ENCODE measurements at regions of chr12 and their contacts with region 1.

Region 1: GRCh38 chr12:121773011-121773777 is 20.3 kb downstream of the RHOF start:
- DNase-seq: peak; percentile 86
- ATAC-seq: peak; percentile 95
- H3K4me3 Mint-ChIP-seq: no peak overlapping the region
- H3K27ac Mint-ChIP-seq: peak overlapping the region; percentile 69
- H3K4me1 Mint-ChIP-seq: peaks cover 12% of the 10 kb centered on the region
- H3K27me3 Mint-ChIP-seq: no peaks in the 10 kb centered on the region
- CTCF ChIP-seq: peak; percentile 85

Region 2: DNA sequence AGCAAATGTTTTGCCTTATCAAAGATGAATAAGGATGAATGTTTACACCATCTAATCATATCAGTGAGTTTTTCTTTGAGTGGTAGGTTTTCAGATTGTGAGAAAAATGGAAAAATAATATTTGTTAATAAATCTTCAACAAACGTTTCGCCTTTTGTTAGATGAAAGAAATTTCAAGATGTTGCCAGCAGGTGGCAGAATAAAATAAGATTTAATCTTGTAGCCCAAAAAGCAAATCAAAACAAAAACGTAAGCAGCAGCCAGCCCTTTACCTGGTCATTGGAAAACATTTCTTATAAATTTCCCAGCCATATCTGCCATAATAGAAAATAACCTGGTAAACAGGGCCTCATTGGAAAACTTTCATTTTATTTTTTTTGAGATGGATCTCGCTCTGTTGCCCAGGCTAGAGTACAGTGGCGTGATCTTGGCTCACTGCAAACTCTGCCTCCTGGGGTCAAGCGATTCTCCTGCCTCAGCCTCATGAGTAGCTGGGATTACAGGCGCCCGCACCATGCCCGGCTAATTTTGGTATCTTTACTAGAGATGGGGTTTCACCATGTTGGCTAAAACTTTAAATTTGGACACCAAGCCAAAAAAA is 76.0 kb before region 1 on chr12:
- CTCF ChIA-PET with region 1: interaction called, 15 read pairs
- POLR2A ChIA-PET with region 1: no interaction called
- intact Hi-C with region 1: loop called (anchors 1 kb)
- DNase-seq: peak; percentile 28
- ATAC-seq: peak; percentile 37
- H3K4me3 Mint-ChIP-seq: no peak overlapping the region
- H3K27ac Mint-ChIP-seq: no peak overlapping the region
- H3K4me1 Mint-ChIP-seq: no peaks in the 10 kb centered on the region
- H3K27me3 Mint-ChIP-seq: no peaks in the 10 kb centered on the region
- CTCF ChIP-seq: peak; percentile 75

Region 3: DNA sequence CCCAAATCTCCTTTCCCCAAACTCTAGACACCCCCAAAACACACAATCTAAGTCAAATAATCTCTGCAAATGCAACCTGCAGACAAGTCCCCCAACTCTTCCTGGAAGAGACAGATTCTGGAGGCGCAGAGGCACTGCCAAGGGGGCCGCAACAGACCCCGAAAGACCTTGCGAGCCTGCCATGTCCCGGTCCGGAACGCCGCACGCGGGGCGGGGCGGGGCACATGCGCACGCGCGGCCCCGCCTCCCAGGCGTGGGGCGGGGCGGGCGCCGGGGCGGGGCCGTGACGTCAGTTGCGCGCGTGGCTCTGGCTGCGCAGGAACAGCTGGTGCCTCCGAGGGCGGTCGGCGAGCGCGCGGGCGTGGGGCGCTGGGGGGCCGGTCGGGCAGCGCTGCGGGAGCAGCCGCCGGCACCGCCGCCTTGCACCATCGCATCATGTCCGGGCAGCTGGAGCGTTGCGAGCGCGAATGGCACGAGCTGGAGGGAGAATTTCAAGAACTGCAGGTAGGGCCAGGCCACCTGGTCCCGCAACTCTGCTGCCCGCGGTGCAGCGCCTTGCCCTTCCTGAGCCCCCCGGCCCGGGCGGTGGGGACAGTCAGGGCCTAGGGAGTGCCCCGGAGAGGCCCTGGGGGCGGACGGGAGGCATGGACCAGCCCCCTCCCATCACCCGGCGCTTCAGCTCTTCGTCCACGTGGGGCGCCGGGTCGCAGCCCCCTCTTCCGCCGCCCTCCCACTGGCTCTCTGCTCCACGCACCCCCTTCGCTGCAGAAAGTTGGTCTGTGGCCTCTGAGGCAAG is 60.5 kb before region 1 on chr12 and contains the start of gene TMEM120B:
- CTCF ChIA-PET with region 1: interaction called, 15 read pairs
- POLR2A ChIA-PET with region 1: interaction called, 5 read pairs
- intact Hi-C with region 1: no loop called
- DNase-seq: peak; percentile 80
- ATAC-seq: peak; percentile 90
- H3K4me3 Mint-ChIP-seq: peak within 1 kb of the TSS; percentile 84
- H3K27ac Mint-ChIP-seq: peak within 1 kb of the TSS; percentile 78
- H3K4me1 Mint-ChIP-seq: peaks cover 16% of the 10 kb centered on the region
- H3K27me3 Mint-ChIP-seq: no peaks in the 10 kb centered on the region
- CTCF ChIP-seq: no peak
- total RNA-seq, gene TMEM120B: 11.7 to 12.7 TPM

Region 4: DNA sequence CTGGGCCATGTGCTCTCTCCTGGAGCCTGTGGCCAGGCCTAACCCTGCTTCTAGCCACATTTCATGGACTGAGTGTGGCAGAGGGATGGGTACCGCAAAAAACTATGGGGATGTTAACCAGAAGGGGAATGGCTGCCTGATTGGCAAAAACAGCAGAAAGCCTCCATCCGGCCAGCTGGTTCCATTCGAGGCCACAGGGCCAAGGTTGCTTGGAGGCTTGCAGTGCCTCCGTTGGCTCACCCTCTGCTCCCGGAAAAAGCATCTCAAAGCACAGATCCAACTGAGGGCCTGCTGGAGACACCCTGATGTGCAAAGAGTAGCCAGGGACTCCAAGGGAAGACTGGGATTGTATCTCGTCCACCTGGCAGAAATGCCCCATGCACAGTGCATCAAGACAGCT is 44.2 kb before region 1 on chr12:
- CTCF ChIA-PET with region 1: no interaction called
- POLR2A ChIA-PET with region 1: no interaction called
- intact Hi-C with region 1: no loop called
- DNase-seq: no peak
- ATAC-seq: no peak
- H3K4me3 Mint-ChIP-seq: no peak overlapping the region
- H3K27ac Mint-ChIP-seq: no peak overlapping the region
- H3K4me1 Mint-ChIP-seq: no peaks in the 10 kb centered on the region
- H3K27me3 Mint-ChIP-seq: no peaks in the 10 kb centered on the region
- CTCF ChIP-seq: no peak

Region 5: GRCh38 chr12:121786441-121786825 is 13.2 kb after region 1 on chr12:
- CTCF ChIA-PET with region 1: interaction called, 420 read pairs
- POLR2A ChIA-PET with region 1: interaction called, 683 read pairs
- intact Hi-C with region 1: no loop called
- DNase-seq: peak; percentile 66
- ATAC-seq: no peak
- H3K4me3 Mint-ChIP-seq: peak overlapping the region; percentile 58
- H3K27ac Mint-ChIP-seq: peak overlapping the region; percentile 100
- H3K4me1 Mint-ChIP-seq: peaks cover 79% of the 10 kb centered on the region
- H3K27me3 Mint-ChIP-seq: no peaks in the 10 kb centered on the region
- CTCF ChIP-seq: no peak

Region 6: DNA sequence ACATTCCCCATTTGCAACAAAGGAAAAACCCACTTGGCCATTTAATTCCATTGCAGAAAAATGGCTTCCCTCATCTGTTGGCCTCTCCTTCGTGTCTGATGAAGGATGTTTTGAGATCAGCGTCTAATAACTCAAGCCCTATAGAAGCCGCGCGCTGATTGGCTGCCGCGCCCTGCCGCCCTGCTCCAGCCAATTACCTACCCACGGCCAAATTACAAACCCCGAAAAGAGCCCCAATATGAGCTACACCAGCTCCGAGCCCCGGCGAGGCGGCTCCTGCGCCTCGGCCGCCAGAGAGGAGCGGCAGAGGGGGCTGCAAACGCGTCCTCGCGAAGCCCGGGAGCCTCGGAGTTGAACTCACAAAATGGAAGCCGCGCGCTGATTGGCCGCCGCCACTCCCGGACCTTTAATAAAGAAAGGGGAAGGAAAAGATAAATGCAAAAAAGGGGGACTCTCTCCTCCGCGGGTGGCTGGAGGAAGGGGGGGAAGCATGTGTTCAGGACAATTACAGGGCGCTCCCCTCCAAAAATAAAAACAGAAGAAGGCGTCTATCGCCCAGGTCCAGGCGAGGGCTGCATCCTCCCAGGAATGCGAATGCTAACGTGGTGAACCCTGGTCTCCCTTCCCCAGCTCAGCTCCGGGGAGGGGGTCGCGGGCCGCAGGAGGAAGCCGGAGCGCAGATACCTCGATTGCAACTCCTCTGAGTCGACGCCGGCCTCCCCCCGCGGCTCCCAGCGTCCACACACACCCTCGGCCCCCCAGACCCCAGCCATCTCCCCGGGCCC is 29.8 kb after region 1 on chr12:
- CTCF ChIA-PET with region 1: interaction called, 420 read pairs
- POLR2A ChIA-PET with region 1: interaction called, 683 read pairs
- intact Hi-C with region 1: no loop called
- DNase-seq: peak; percentile 97
- ATAC-seq: peak; percentile 60
- H3K4me3 Mint-ChIP-seq: peak overlapping the region; percentile 83
- H3K27ac Mint-ChIP-seq: peak overlapping the region; percentile 99
- H3K4me1 Mint-ChIP-seq: peaks cover 26% of the 10 kb centered on the region
- H3K27me3 Mint-ChIP-seq: no peaks in the 10 kb centered on the region
- CTCF ChIP-seq: no peak

Region 7: GRCh38 chr12:121811434-121812319 is 38.5 kb after region 1 on chr12:
- CTCF ChIA-PET with region 1: interaction called, 30 read pairs
- POLR2A ChIA-PET with region 1: interaction called, 683 read pairs
- intact Hi-C with region 1: no loop called
- DNase-seq: peak; percentile 67
- ATAC-seq: peak; percentile 84
- H3K4me3 Mint-ChIP-seq: peak overlapping the region; percentile 74
- H3K27ac Mint-ChIP-seq: peak overlapping the region; percentile 79
- H3K4me1 Mint-ChIP-seq: peaks cover 37% of the 10 kb centered on the region
- H3K27me3 Mint-ChIP-seq: no peaks in the 10 kb centered on the region
- CTCF ChIP-seq: peak; percentile 99